Right cardiac atrium (tissue), 5 donors: ENCODE measurements at regions of chr7 and their contacts with region 1.

Region 1: DNA sequence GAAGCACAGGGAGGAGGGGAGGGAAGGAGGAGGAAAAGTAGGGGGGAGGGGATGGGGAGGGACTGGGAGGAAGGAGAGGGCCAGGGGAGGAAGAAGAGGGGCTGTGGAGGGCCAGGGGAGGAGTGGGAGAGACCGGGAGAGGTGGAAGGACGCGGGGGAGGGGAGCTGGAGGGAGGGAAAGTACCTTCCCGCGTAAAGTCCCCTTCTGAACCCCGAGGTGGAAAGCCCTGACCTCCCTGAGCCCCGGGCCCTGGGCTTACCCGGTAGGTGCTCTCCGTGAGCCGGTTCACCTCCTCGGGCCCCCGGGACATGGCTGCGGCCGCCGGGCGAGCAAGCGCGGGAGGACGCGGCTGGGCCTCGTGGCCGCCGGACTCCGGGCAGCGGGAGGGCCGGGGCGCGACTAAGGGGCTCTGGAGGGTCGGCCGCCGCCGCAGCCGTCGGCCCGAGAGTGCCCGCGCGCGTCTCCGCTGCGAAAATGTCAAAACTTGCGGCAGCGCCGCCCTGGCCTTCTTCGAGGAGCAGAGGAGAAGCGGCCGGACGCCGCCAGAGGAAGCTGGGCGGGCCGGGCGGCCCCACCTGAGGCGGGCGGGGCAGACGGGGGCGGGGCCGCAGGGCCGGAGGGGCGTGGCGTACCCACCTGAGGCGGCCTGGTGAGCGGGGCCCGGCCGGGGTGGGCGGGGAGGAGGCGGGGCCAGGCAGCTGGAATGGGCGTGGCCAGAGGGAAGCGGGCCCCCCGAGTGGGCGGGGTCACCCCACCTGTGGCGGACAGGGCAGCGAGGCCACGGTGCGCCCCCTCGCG is at the start of gene BAIAP2L1:
- DNase-seq: peak; percentile 68 to 91 (median 84)
- ATAC-seq: peak; percentile 91 to 94
- H3K4me3 ChIP-seq: peak within 1 kb of the TSS; percentile 78
- H3K27ac ChIP-seq: peak within 1 kb of the TSS; percentile 44
- H3K4me1 ChIP-seq: no peaks in the 10 kb centered on the region
- H3K27me3 ChIP-seq: no peaks in the 10 kb centered on the region
- total RNA-seq, gene BAIAP2L1: 0.71 to 2.0 (median 1.2) TPM

Region 2: DNA sequence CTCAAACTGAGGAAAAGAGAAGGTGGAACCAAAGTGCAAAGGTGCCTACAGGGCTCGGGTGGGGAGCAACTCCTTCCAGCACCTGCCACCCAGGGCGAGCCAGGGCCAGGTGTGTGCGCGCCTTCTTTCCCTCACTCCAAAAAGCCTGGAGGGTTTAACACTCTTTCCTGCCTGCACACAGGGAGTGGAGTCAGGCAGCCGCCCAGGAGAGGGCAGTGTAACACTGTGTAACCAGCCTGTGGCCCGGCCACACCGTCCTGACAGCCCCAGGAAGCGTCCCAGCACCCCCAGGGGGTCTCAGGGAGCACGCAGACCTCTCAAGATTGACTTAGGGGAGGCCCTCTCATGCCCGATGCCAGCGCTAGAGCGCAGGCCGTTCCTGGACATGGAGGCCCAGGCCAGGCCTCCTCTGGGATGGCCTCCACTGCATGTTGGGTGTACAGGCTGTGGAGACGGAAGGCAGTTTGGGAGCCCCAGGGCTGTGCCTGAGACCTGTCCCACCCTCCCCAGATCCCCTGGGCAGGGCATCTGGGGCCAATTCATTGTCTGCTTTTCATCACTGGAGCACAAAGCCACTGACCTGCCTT is 105.9 kb before region 1 on chr7:
- intact Hi-C with region 1: loop called in 3 of 4 experiments (anchors 5 to 10 kb)
- DNase-seq: peak in 2 of 3 donors; percentile 39 to 78
- ATAC-seq: peak; percentile 52 to 61
- H3K4me3 ChIP-seq: no peak overlapping the region
- H3K27ac ChIP-seq: no peak overlapping the region
- H3K4me1 ChIP-seq: no peaks in the 10 kb centered on the region
- H3K27me3 ChIP-seq: no peaks in the 10 kb centered on the region

Region 3: GRCh38 chr7:98520356-98520969 is 119.7 kb after region 1 on chr7:
- intact Hi-C with region 1: no loop called
- DNase-seq: peak in 1 of 3 donors; percentile 56
- ATAC-seq: no peak
- H3K4me3 ChIP-seq: no peak overlapping the region
- H3K27ac ChIP-seq: no peak overlapping the region
- H3K4me1 ChIP-seq: no peaks in the 10 kb centered on the region
- H3K27me3 ChIP-seq: no peaks in the 10 kb centered on the region